ENCODE measurements at regions of chr16 and their contacts with region 1.

Region 1: DNA sequence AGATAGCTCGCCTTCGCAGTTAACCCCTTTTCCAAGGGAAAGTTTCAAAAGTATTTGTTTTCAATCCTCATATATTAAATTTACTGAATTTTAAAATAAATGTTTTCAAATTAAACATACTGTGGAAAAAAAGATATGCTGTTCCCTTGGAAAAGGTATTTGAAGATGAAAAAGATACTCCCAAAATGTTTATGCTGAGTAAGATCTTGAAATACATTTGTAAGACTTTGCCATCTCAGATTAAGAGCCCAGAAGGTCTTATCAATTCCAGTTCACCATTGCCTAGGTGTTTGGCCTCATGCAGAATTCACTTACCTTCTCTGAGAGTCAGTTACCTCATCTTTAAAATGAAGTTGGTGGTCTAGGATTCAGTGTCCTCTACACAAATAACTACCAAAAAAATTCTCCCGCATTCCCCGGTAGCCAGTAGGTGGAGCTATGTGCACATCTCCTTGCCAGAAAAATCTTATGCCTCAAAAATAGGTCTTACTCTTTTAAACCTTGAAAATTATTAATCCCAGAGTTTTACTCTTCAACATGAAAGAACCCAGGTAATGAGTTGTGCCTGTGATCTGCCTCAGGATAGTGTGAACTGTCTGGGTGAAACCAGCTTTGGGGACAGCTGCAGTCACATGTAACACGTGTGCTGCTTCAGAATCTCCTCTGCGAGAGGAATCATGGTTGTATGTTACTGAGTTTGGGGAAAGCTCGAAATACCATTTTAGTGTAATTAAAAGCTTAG is 178.3 kb downstream of the MRTFB start:
- DNase-seq: peak; percentile 36 to 46
- ATAC-seq: peak; percentile 60 to 61; a peak in 4 of 6 replicates
- H3K4me3 ChIP-seq: no peak overlapping the region
- H3K27ac ChIP-seq: peak overlapping the region; percentile 64 to 65
- H3K4me1 ChIP-seq: peaks cover 8% of the 10 kb centered on the region
- CTCF ChIP-seq: peak; percentile 97
- EP300 ChIP-seq: no peak
- POLR2A ChIP-seq: no peak
- RAD21 ChIP-seq: peak; percentile 89 to 93

Region 2: DNA sequence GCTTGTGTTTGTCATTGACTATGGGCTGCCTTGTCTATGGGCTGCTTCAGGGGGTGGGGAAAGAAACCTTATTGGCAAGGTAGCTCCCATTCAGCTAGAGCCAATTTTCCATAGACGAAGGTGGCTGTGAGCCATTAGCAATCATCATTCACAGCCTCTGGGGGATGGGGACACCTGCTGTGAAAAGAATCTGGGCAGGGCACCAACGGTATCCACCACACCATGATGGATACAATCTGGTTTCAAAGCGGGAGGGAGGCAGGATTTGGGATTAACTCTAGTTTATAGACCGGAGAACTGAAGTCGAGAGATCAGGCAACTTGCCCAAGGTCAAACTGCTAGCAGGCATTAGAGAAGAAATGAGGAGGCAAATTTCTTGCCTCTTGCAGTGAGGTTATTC is 1165.8 kb before region 1 on chr16:
- CTCF ChIA-PET with region 1: no interaction called
- POLR2A ChIA-PET with region 1: no interaction called
- DNase-seq: no peak
- ATAC-seq: no peak
- H3K4me3 ChIP-seq: no peak overlapping the region
- H3K27ac ChIP-seq: no peak overlapping the region
- H3K4me1 ChIP-seq: no peaks in the 10 kb centered on the region
- CTCF ChIP-seq: no peak
- EP300 ChIP-seq: no peak
- POLR2A ChIP-seq: no peak
- RAD21 ChIP-seq: no peak

Region 3: GRCh38 chr16:13863075-13863765 is 386.2 kb before region 1 on chr16:
- CTCF ChIA-PET with region 1: no interaction called
- POLR2A ChIA-PET with region 1: no interaction called
- DNase-seq: no peak
- ATAC-seq: no peak
- H3K4me3 ChIP-seq: no peak overlapping the region
- H3K27ac ChIP-seq: no peak overlapping the region
- H3K4me1 ChIP-seq: no peaks in the 10 kb centered on the region
- CTCF ChIP-seq: no peak
- EP300 ChIP-seq: no peak
- POLR2A ChIP-seq: no peak
- RAD21 ChIP-seq: no peak

Region 4: GRCh38 chr16:14263011-14263410 is 13.5 kb after region 1 on chr16:
- CTCF ChIA-PET with region 1: interaction called, 26 read pairs
- POLR2A ChIA-PET with region 1: no interaction called
- DNase-seq: no peak
- ATAC-seq: no peak
- H3K4me3 ChIP-seq: no peak overlapping the region
- H3K27ac ChIP-seq: no peak overlapping the region
- H3K4me1 ChIP-seq: no peaks in the 10 kb centered on the region
- CTCF ChIP-seq: no peak
- EP300 ChIP-seq: no peak
- POLR2A ChIP-seq: no peak
- RAD21 ChIP-seq: no peak

Region 5: GRCh38 chr16:14280541-14280940 is 31.1 kb after region 1 on chr16:
- CTCF ChIA-PET with region 1: interaction called, 13 read pairs
- POLR2A ChIA-PET with region 1: no interaction called
- DNase-seq: no peak
- ATAC-seq: no peak
- H3K4me3 ChIP-seq: no peak overlapping the region
- H3K27ac ChIP-seq: no peak overlapping the region
- H3K4me1 ChIP-seq: peaks cover 12% of the 10 kb centered on the region; the same call in 1 of the 3 replicates
- CTCF ChIP-seq: no peak
- EP300 ChIP-seq: no peak
- POLR2A ChIP-seq: no peak
- RAD21 ChIP-seq: no peak

Region 6: GRCh38 chr16:14321542-14321941 is 72.1 kb after region 1 on chr16:
- CTCF ChIA-PET with region 1: no interaction called
- POLR2A ChIA-PET with region 1: no interaction called
- DNase-seq: peak; percentile 52 to 56
- ATAC-seq: peak; percentile 61 to 63; a peak in 5 of 6 replicates
- H3K4me3 ChIP-seq: no peak overlapping the region
- H3K27ac ChIP-seq: peak overlapping the region in 1 of 2 experiments; percentile 46; a peak in 2 of 6 replicates
- H3K4me1 ChIP-seq: peaks cover 74% of the 10 kb centered on the region
- CTCF ChIP-seq: no peak
- EP300 ChIP-seq: no peak
- POLR2A ChIP-seq: no peak
- RAD21 ChIP-seq: no peak

Region 7: GRCh38 chr16:14600164-14600563 is 350.7 kb after region 1 on chr16:
- CTCF ChIA-PET with region 1: interaction called, 19 read pairs
- POLR2A ChIA-PET with region 1: no interaction called
- DNase-seq: peak; percentile 51 to 59
- ATAC-seq: peak; percentile 66 to 67; a peak in 4 of 6 replicates
- H3K4me3 ChIP-seq: no peak overlapping the region
- H3K27ac ChIP-seq: 0 out of 6 replicates have a peak overlapping the region, but pooled peaks of 1 of the 2 experiments have one; percentile 16
- H3K4me1 ChIP-seq: no peaks in the 10 kb centered on the region
- CTCF ChIP-seq: peak; percentile 53
- EP300 ChIP-seq: no peak
- POLR2A ChIP-seq: no peak
- RAD21 ChIP-seq: peak; percentile 48 to 51; a peak in 3 of 5 replicates

Measured in A549 (cell line).